Activated CD4-positive, alpha-beta T cell treated with anti-CD3 and anti-CD28 coated beads, Interleukin-2, amount 10 ng/mL, durations not matched to agents 7 days and 5 days (primary cell): ENCODE measurements at regions of chr2 and their contacts with region 1.

Region 1: DNA sequence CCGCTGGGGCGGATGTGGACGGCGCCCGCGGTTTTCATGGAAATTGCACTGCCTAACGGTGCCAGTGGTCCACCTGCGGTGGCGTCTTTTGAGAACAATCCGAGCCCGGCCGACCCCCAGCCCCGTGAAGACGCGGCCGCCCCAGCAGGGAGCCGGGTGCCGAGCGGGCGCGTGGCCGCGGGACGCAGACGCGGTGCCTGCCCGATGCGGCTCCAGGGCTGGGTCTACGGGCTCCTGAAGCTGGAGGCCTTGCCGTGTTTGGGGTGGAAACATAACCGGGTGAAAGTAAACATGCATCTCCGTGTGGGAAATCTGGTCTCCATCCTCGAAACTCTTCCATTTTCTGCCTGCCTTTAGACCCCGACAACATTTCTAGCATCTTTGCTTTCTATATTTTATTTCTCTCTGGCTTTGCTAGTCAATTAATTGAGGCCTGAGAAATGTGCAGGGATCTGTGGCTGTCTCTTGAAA is 554 bp downstream of the INPP4A start:
- DNase-seq: peak; percentile 32
- H3K4me3 Mint-ChIP-seq: peak overlapping the region; percentile 93
- H3K27ac Mint-ChIP-seq: peak overlapping the region; percentile 94
- H3K4me1 Mint-ChIP-seq: peaks cover 40% of the 10 kb centered on the region
- H3K27me3 Mint-ChIP-seq: no peaks in the 10 kb centered on the region

Region 2: GRCh38 chr2:98372121-98372520 is 73.1 kb before region 1 on chr2:
- CTCF ChIA-PET with region 1: no interaction called
- POLR2A ChIA-PET with region 1: no interaction called
- DNase-seq: no peak
- H3K4me3 Mint-ChIP-seq: no peak overlapping the region
- H3K27ac Mint-ChIP-seq: no peak overlapping the region
- H3K4me1 Mint-ChIP-seq: no peaks in the 10 kb centered on the region
- H3K27me3 Mint-ChIP-seq: peaks cover 23% of the 10 kb centered on the region

Region 3: DNA sequence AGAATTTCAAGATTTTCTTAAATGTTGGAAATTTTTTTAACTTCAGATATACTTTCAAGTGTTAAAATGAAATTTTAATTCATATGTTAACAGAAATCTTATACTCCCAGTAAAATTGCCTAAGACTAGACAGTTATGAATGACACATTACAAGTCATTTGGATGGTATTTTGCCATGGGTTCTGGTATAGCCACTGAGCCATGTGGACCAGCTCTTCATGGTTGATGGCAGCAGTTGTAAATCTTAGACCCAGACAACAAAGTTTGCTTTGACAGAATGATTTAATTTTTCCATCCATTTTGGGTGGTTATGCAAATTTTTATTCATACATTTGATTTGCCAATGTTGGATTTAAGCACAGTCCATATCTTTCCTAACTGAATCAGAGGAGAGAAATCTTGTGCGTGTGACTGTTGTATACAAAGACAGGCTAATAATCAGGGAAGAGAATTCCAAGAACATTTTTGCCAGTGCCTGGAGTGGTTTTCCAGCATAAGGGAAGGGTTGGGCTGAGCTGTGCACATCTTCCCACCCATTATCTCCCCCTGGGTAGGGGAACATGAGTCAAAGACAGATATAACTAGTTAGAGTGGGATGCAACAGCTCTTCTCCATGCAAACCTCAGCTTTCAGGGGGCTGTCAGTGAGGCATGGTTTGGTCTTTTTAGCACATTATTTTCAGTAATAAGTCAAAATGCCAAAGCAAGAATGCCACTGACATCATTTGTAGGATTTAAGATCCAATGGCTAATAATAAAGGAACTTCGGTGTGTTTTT is 28.6 kb before region 1 on chr2:
- CTCF ChIA-PET with region 1: no interaction called
- POLR2A ChIA-PET with region 1: no interaction called
- DNase-seq: no peak
- H3K4me3 Mint-ChIP-seq: no peak overlapping the region
- H3K27ac Mint-ChIP-seq: no peak overlapping the region
- H3K4me1 Mint-ChIP-seq: peaks cover 7% of the 10 kb centered on the region
- H3K27me3 Mint-ChIP-seq: no peaks in the 10 kb centered on the region

Region 4: DNA sequence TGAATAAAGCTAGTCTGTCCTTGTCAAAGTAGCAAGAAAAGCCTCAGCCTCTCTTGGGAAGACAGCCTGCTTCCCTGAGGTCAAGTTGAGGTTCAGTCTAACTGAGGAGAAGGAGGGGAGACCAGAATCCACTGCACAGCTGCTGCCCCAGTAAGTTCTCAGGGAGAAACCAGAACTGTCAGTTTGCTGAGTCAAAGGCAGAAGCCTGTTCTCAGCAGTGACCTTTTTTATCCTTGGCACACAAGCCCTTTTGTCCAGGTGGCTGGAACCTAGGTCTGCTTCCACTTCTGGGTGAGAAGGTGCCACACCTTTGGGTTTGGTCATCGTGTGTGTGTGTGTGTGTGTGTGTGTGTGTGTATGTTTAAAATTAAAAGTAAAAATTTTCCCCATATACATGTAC is 14.6 kb after region 1 on chr2:
- CTCF ChIA-PET with region 1: interaction called, 46 read pairs
- POLR2A ChIA-PET with region 1: interaction called, 3 read pairs
- DNase-seq: no peak
- H3K4me3 Mint-ChIP-seq: peak overlapping the region; percentile 51
- H3K27ac Mint-ChIP-seq: peak overlapping the region; percentile 93
- H3K4me1 Mint-ChIP-seq: peaks cover 89% of the 10 kb centered on the region
- H3K27me3 Mint-ChIP-seq: no peaks in the 10 kb centered on the region